ENCODE measurements at regions of chr18 and their contacts with region 1.

Region 1: GRCh38 chr18:12278741-12279682 is 24.9 kb downstream of the CIDEA start:
- DNase-seq: no peak
- ATAC-seq: no peak
- H3K4me3 ChIP-seq: no peak overlapping the region
- H3K27ac ChIP-seq: no peak overlapping the region
- H3K4me1 ChIP-seq: peaks cover 24% of the 10 kb centered on the region
- H3K27me3 ChIP-seq: no peaks in the 10 kb centered on the region
- CTCF ChIP-seq: no peak

Region 2: GRCh38 chr18:12317664-12318333 is 38.8 kb after region 1 on chr18:
- CTCF ChIA-PET with region 1: no interaction called
- POLR2A ChIA-PET with region 1: no interaction called
- intact Hi-C with region 1: no loop called
- DNase-seq: no peak
- ATAC-seq: peak; percentile 31; the same call in 1 of the 2 replicates
- H3K4me3 ChIP-seq: no peak overlapping the region
- H3K27ac ChIP-seq: no peak overlapping the region
- H3K4me1 ChIP-seq: no peaks in the 10 kb centered on the region
- H3K27me3 ChIP-seq: no peaks in the 10 kb centered on the region
- CTCF ChIP-seq: no peak

Region 3: GRCh38 chr18:12336875-12337274 is 57.9 kb after region 1 on chr18:
- CTCF ChIA-PET with region 1: no interaction called
- POLR2A ChIA-PET with region 1: no interaction called
- intact Hi-C with region 1: loop called (anchors 5 kb)
- DNase-seq: peak; percentile 90
- ATAC-seq: peak; percentile 98
- H3K4me3 ChIP-seq: no peak overlapping the region
- H3K27ac ChIP-seq: peak overlapping the region; percentile 2; the same call in 1 of the 2 replicates
- H3K4me1 ChIP-seq: peaks cover 21% of the 10 kb centered on the region
- H3K27me3 ChIP-seq: no peaks in the 10 kb centered on the region
- CTCF ChIP-seq: no peak